Heart left ventricle (tissue), 16 donors: ENCODE measurements at regions of chrX and their contacts with region 1.

Region 1: DNA sequence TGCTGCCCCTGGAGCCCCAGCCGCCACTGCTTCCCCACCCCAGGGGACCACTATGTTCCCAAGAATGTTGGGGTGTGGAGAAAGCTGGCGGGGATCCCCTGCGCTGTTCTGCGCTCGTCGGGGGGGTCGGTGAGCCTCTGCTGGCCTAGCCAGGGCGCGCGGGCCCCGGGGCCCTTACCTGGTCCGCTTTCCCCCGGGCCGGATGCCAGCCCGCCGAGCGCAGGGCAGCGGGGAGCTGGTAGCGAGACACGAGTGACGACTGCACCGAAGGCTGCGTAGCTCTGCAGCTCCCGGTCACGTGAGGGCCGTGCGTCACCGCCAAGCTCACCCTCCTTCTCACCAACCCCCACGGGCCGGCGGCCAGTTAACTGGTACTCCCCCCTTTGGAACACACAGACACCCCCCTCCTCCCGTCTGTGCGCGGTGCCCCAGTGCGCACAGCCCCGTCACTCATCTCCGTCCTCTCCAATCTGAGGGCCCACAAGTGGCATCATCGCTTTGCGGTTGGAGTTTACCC is at the start of gene BEX1:
- DNase-seq: peak in 4 of 5 donors; percentile 26 to 42 (median 28)
- ATAC-seq: peak in 3 of 4 donors; percentile 67 to 85 (median 74)
- H3K4me3 ChIP-seq: peak within 1 kb of the TSS in 9 of 12 donors; percentile 26 to 44 (median 37)
- H3K27ac ChIP-seq: no peak within 1 kb of the TSS
- H3K4me1 ChIP-seq: no peaks in the 10 kb centered on the region
- H3K27me3 ChIP-seq: peaks cover 0 to 16% (median 0%) of the 10 kb centered on the region in 9 donors
- CTCF ChIP-seq: no peak
- POLR2A ChIP-seq: no peak
- total RNA-seq, gene BEX1: 0.42 to 17.6 (median 3.4) TPM

Region 2: GRCh38 chrX:102560423-102561068 is 503.4 kb before region 1 on chrX:
- intact Hi-C with region 1: no loop called
- DNase-seq: no peak
- ATAC-seq: no peak
- H3K4me3 ChIP-seq: no peak overlapping the region
- H3K27ac ChIP-seq: no peak overlapping the region
- H3K4me1 ChIP-seq: no peaks in the 10 kb centered on the region
- H3K27me3 ChIP-seq: peaks cover 0 to 5% (median 0%) of the 10 kb centered on the region in 9 donors
- CTCF ChIP-seq: no peak
- POLR2A ChIP-seq: no peak

Region 3: GRCh38 chrX:103081051-103081450 is 17.1 kb after region 1 on chrX:
- intact Hi-C with region 1: no loop called
- DNase-seq: no peak
- ATAC-seq: no peak
- H3K4me3 ChIP-seq: no peak overlapping the region
- H3K27ac ChIP-seq: no peak overlapping the region
- H3K4me1 ChIP-seq: no peaks in the 10 kb centered on the region
- H3K27me3 ChIP-seq: peaks cover 0 to 6% (median 0%) of the 10 kb centered on the region in 9 donors
- CTCF ChIP-seq: no peak
- POLR2A ChIP-seq: no peak

Region 4: DNA sequence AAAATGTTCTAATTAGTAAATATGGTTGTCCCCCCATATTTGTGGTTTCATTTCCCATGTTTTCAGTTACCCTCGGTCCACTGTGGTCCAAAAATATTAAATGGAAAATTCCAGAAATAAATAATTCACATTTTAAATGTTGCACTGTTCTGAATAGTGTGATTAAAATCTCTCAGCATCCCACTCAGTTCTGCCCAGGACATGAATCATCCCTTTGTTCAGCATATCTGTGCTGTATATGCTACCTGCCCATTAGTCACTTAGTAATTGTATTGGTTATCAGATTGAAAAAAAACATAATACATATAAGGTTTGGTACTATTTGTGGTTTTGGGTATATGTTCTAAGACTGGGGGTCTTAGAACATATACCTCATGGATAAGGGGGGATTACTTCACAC is 84.1 kb after region 1 on chrX:
- intact Hi-C with region 1: loop called in 1 of 10 experiments (anchors 10 kb)
- DNase-seq: no peak
- ATAC-seq: no peak
- H3K4me3 ChIP-seq: no peak overlapping the region
- H3K27ac ChIP-seq: no peak overlapping the region
- H3K4me1 ChIP-seq: peaks cover 0 to 4% (median 0%) of the 10 kb centered on the region in 12 donors
- H3K27me3 ChIP-seq: peaks cover 0 to 10% (median 0%) of the 10 kb centered on the region in 9 donors
- CTCF ChIP-seq: no peak
- POLR2A ChIP-seq: no peak